Ascending aorta (tissue), 2 donors: ENCODE measurements at regions of chr12 and their contacts with region 1.

Region 1: DNA sequence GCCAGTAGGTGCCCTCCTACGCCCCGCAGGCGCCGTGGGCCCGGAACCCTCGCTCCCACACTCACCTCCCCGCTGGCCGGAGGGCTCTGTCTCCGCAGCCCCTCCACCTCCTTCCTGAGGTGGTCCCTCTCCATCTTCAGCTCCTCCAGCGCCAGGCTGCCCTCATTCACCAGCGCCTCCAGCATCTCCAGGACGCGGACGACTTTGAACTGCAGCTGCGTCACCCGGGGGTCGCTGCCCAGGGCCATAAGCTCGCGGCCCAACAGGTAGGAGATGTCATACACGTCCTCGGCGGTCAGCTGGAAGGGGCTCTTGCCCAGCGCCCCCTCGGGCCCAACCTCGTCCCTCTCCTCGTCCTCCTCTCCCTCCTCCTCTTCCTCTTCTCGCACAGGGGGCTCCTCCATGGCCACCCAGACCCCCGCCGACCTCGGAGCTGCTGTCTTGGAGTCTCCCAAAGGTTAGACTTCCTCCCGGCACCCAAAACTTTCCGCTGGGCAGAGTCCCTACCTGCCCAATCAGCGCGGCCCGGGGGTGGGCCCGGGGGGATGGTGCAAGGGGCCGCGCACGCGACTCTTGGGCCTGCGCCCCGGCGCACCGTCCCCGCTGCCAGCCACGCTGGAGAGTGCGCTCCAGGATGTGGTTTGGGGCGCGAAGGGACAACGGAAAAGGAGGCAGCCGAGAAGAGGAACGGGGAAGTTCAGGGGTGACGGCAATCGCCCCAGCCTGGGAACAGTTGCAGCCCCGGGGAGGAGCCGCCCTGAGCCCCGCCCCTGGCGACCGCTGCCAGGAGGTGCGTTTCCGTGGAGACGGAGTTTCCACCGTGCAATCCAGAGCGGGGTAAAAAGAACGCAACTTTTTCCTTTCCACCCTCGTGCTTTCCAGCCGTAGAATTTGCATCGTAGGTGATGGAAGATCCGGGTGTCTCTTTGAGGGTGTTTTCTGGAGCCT is at the start of gene RILPL2:
- DNase-seq: peak; percentile 79 to 96
- H3K4me3 ChIP-seq: peak within 1 kb of the TSS; percentile 77 to 92
- H3K27ac ChIP-seq: peak within 1 kb of the TSS; percentile 86 to 90
- H3K4me1 ChIP-seq: peaks cover 10 to 33% of the 10 kb centered on the region in 2 donors
- H3K27me3 ChIP-seq: no peaks in the 10 kb centered on the region
- CTCF ChIP-seq: no peak
- total RNA-seq, gene RILPL2: 7.2 TPM

Region 2: GRCh38 chr12:123365025-123365917 is 71.0 kb before region 1 on chr12:
- intact Hi-C with region 1: loop called (anchors 2 kb)
- DNase-seq: peak; percentile 95 to 99
- H3K4me3 ChIP-seq: peak overlapping the region; percentile 89 to 93
- H3K27ac ChIP-seq: peak overlapping the region; percentile 90 to 92
- H3K4me1 ChIP-seq: peaks cover 4 to 22% of the 10 kb centered on the region in 2 donors
- H3K27me3 ChIP-seq: no peaks in the 10 kb centered on the region
- CTCF ChIP-seq: peak; percentile 70 to 80 (median 76)

Region 3: GRCh38 chr12:123398550-123399254 is 37.6 kb before region 1 on chr12:
- intact Hi-C with region 1: loop called (anchors 5 kb)
- DNase-seq: peak; percentile 46 to 93
- H3K4me3 ChIP-seq: peak overlapping the region; percentile 37 to 46
- H3K27ac ChIP-seq: peak overlapping the region; percentile 86 to 93
- H3K4me1 ChIP-seq: peaks cover 24 to 47% of the 10 kb centered on the region in 2 donors
- H3K27me3 ChIP-seq: no peaks in the 10 kb centered on the region
- CTCF ChIP-seq: no peak

Region 4: GRCh38 chr12:123478762-123479161 is 42.5 kb after region 1 on chr12:
- intact Hi-C with region 1: loop called (anchors 5 kb)
- DNase-seq: peak; percentile 72 to 92
- H3K4me3 ChIP-seq: peak overlapping the region; percentile 6 to 46
- H3K27ac ChIP-seq: peak overlapping the region; percentile 93 to 97
- H3K4me1 ChIP-seq: peaks cover 24 to 55% of the 10 kb centered on the region in 2 donors
- H3K27me3 ChIP-seq: no peaks in the 10 kb centered on the region
- CTCF ChIP-seq: no peak

Region 5: GRCh38 chr12:123533672-123534643 is 97.7 kb after region 1 on chr12 and contains the start of gene RILPL1:
- intact Hi-C with region 1: loop called (anchors 5 kb)
- DNase-seq: peak in 1 of 2 donors; percentile 68
- H3K4me3 ChIP-seq: peak within 1 kb of the TSS; percentile 89 to 93
- H3K27ac ChIP-seq: peak within 1 kb of the TSS; percentile 87 to 95
- H3K4me1 ChIP-seq: peaks cover 0 to 22% of the 10 kb centered on the region in 2 donors
- H3K27me3 ChIP-seq: no peaks in the 10 kb centered on the region
- CTCF ChIP-seq: peak; percentile 11 to 41 (median 22)
- total RNA-seq, gene RILPL1: 1.5 TPM